Activated CD4-positive, alpha-beta T cell treated with anti-CD3 and anti-CD28 coated beads for 36 hours (primary cell): ENCODE measurements at regions of chr2 and their contacts with region 1.

Region 1: DNA sequence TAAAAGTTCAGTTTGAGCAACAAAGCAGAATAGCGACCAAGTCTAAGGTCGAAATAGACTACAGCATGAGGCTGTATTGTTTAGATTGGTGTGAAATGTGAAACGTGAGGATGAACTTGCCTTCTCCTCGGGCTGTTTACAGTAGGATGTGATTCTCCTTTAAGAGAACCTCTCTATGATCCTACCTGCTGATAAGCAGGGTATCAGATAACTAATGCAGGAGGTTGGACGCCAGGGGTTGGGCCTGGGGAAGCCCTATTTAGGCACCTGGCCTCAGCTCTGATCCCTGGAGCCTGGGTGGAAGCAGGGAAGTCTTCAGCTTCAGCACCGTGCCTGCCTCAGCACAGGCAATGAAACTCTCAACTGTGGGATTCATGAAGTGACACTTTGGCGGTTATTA is 11.4 kb downstream of the CRYGD start:
- DNase-seq: no peak
- ATAC-seq: no peak
- H3K4me3 Mint-ChIP-seq: no peak overlapping the region
- H3K27ac Mint-ChIP-seq: no peak overlapping the region
- H3K4me1 Mint-ChIP-seq: no peaks in the 10 kb centered on the region
- H3K27me3 Mint-ChIP-seq: no peaks in the 10 kb centered on the region

Region 2: GRCh38 chr2:208090420-208090819 is 22.5 kb before region 1 on chr2:
- CTCF ChIA-PET with region 1: no interaction called
- POLR2A ChIA-PET with region 1: no interaction called
- intact Hi-C with region 1: loop called in 1 of 2 experiments (anchors 1 kb)
- DNase-seq: no peak
- ATAC-seq: no peak
- H3K4me3 Mint-ChIP-seq: no peak overlapping the region
- H3K27ac Mint-ChIP-seq: no peak overlapping the region
- H3K4me1 Mint-ChIP-seq: no peaks in the 10 kb centered on the region
- H3K27me3 Mint-ChIP-seq: no peaks in the 10 kb centered on the region

Region 3: GRCh38 chr2:208189810-208190503 is 77.0 kb after region 1 on chr2 and contains the start of gene C2orf80:
- CTCF ChIA-PET with region 1: no interaction called
- POLR2A ChIA-PET with region 1: no interaction called
- intact Hi-C with region 1: no loop called
- DNase-seq: no peak
- ATAC-seq: no peak
- H3K4me3 Mint-ChIP-seq: no peak within 1 kb of the TSS
- H3K27ac Mint-ChIP-seq: no peak within 1 kb of the TSS
- H3K4me1 Mint-ChIP-seq: no peaks in the 10 kb centered on the region
- H3K27me3 Mint-ChIP-seq: no peaks in the 10 kb centered on the region
- total RNA-seq, gene C2orf80: not detected